Mammary epithelial cell (primary cell): ENCODE measurements at regions of chr9 and their contacts with region 1.

Region 1: GRCh38 chr9:38371495-38371894 is 21.0 kb upstream of the ALDH1B1 start:
- DNase-seq: peak; percentile 52
- H3K4me3 ChIP-seq: no peak overlapping the region
- H3K27ac ChIP-seq: no peak overlapping the region
- H3K4me1 ChIP-seq: no peaks in the 10 kb centered on the region
- H3K27me3 ChIP-seq: no peaks in the 10 kb centered on the region
- CTCF ChIP-seq: peak; percentile 48 to 71

Region 2: DNA sequence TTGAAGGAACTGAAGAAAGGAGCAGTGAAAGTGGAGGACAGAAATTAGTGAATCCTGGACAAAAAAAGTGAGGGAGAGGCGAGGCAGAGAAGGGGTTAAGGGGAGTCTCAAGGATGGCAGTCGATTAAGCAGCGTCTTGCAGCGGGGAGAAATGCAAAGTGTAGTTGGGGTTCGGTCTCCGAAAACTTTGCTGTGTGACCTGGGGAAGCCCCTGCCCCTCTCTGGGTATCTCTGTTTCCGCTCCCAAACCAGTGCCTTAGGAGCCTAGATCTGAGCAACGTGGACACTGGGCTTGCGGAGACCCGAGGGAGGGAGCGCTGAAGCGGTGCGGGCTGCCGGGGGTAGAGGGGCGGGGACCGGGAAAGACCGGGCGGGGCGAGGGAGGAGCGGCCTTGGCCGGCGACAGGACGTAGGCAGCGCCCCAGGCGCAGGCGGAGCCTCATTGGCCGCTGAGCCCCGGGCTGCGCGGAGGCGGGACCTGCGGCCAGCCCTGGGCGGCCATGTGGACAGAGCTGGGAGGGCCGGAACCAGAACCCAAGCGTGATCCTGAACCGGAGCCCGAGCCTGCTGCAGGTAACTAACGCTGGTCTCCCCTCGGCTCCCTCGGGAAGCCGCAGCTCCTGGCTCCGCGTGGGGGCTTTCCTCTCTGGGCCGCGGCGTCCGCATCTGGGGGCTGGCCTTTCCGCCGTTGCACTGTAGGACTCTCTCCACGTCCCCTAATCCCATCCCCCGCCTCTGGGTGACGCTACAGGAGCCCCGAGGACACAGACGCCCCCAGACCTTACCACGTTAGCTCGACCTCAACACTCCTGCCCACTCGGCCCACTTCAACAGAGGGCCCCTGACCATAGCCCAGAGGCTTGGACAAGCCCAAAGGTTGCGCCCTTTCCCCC is 21.0 kb after region 1 on chr9 and contains the start of gene ALDH1B1:
- CTCF ChIA-PET with region 1: no interaction called
- dilution Hi-C with region 1: no loop called
- in situ Hi-C with region 1: no loop called
- intact Hi-C with region 1: loop called (anchors 2 kb)
- DNase-seq: peak; percentile 80
- H3K4me3 ChIP-seq: peak within 1 kb of the TSS; percentile 68 to 73 (median 72)
- H3K27ac ChIP-seq: peak within 1 kb of the TSS; percentile 25
- H3K4me1 ChIP-seq: no peaks in the 10 kb centered on the region
- H3K27me3 ChIP-seq: no peaks in the 10 kb centered on the region
- CTCF ChIP-seq: peak in 1 of 2 donors; percentile 17
- total RNA-seq, gene ALDH1B1: 30.0 to 69.8 TPM

Region 3: DNA sequence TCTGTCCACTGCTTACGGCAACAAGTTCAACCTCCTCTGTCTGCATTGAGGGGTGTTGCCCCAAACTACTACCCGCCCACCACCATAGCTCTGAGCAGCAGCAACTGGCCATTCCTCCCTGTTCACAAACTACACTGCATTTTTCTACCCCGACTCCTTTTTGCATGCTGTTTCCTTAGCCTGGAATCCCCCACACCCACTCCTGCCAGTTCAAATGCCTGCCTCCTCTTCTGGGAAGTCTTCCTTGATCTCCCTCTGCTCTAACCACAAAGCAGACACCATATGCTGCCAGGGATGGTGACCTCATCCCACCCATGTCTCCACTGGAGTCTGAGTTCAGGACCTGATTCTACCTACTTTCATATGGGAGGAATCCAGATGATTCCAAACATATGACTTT is 34.3 kb after region 1 on chr9:
- CTCF ChIA-PET with region 1: no interaction called
- dilution Hi-C with region 1: no loop called
- in situ Hi-C with region 1: no loop called
- intact Hi-C with region 1: loop called (anchors 1 kb)
- DNase-seq: no peak
- H3K4me3 ChIP-seq: no peak overlapping the region
- H3K27ac ChIP-seq: no peak overlapping the region
- H3K4me1 ChIP-seq: no peaks in the 10 kb centered on the region
- H3K27me3 ChIP-seq: peaks cover 4% of the 10 kb centered on the region
- CTCF ChIP-seq: no peak

Region 4: GRCh38 chr9:38432922-38433510 is 61.5 kb after region 1 on chr9:
- CTCF ChIA-PET with region 1: no interaction called
- dilution Hi-C with region 1: no loop called
- in situ Hi-C with region 1: no loop called
- intact Hi-C with region 1: loop called (anchors 1 kb)
- DNase-seq: peak; percentile 21
- H3K4me3 ChIP-seq: no peak overlapping the region
- H3K27ac ChIP-seq: no peak overlapping the region
- H3K4me1 ChIP-seq: no peaks in the 10 kb centered on the region
- H3K27me3 ChIP-seq: peaks cover 2% of the 10 kb centered on the region
- CTCF ChIP-seq: peak; percentile 43 to 64